CD4-positive, alpha-beta memory T cell (primary cell): ENCODE measurements at regions of chr18 and their contacts with region 1.

Region 1: DNA sequence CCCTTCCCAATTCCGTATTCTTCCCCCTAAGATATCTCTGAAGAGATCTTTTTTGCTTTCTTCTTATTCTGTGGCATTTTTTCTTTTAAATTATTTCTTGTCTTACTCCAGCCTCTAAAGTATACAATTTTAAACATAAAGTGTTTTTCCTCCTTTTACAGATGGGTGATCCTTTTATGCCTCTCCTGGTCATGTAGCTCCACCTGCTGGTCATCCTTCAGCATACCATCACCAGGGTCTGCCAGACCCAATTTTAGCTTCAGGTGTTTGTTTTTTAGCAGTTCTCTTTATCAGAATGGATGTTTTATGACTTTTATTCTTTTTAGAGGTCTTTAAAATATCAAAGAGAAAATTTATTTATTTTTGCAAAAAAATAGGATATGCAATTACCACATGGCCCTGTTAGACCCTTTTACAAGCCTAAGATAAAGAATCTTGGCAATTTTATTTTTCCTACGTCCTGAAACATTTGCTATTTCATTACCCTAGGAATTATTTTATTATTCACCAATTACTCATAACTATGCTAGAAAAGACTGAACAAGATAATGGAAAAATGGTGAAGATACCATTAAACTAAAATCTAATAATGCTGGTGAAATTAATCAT is 55.5 kb downstream of the PIGN start:
- DNase-seq: peak; percentile 54 to 64 (median 59)
- H3K4me3 ChIP-seq: no peak overlapping the region
- H3K4me3 Mint-ChIP-seq: no peak overlapping the region
- H3K27ac ChIP-seq: no peak overlapping the region
- H3K27ac Mint-ChIP-seq: no peak overlapping the region
- H3K4me1 ChIP-seq: no peaks in the 10 kb centered on the region
- H3K4me1 Mint-ChIP-seq: peaks cover 0 to 3% (median under 1%) of the 10 kb centered on the region in 4 donors
- H3K27me3 ChIP-seq: no peaks in the 10 kb centered on the region
- H3K27me3 Mint-ChIP-seq: no peaks in the 10 kb centered on the region

Region 2: DNA sequence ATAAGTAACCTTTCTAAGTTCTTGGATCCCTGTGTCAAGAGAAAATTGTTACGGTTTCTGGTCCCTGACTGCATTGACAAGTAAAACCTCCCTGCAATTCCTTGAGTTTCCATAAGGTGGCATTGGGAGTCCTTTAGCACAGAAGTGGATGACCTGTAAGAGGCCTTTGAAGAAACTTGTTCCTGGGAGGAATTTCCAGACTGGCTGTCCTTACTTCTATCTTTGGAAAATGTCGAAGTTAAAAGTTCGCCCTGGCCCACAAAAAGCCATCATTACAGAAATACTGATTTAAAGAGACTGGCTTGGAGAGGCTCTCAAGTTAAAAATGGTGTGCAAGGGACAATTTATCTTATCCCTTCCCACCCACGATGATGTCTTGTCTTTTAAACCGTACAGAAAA is 579.8 kb before region 1 on chr18:
- CTCF ChIA-PET with region 1: interaction called, 13 read pairs
- POLR2A ChIA-PET with region 1: no interaction called
- intact Hi-C with region 1: loop called (anchors 1 kb)
- DNase-seq: peak in 4 of 5 donors; percentile 5 to 27 (median 18)
- H3K4me3 ChIP-seq: no peak overlapping the region
- H3K4me3 Mint-ChIP-seq: no peak overlapping the region
- H3K27ac ChIP-seq: no peak overlapping the region
- H3K27ac Mint-ChIP-seq: no peak overlapping the region
- H3K4me1 ChIP-seq: no peaks in the 10 kb centered on the region
- H3K4me1 Mint-ChIP-seq: peaks cover 0 to 8% (median 1%) of the 10 kb centered on the region in 4 donors
- H3K27me3 ChIP-seq: no peaks in the 10 kb centered on the region
- H3K27me3 Mint-ChIP-seq: peaks cover 0 to 2% of the 10 kb centered on the region in 2 donors

Region 3: GRCh38 chr18:61581578-61582201 is 549.7 kb before region 1 on chr18:
- CTCF ChIA-PET with region 1: interaction called, 92 read pairs
- POLR2A ChIA-PET with region 1: no interaction called
- intact Hi-C with region 1: loop called (anchors 1 kb)
- DNase-seq: peak; percentile 47 to 62 (median 50)
- H3K4me3 ChIP-seq: no peak overlapping the region
- H3K4me3 Mint-ChIP-seq: peak overlapping the region in 5 of 8 donors; percentile 13 to 63 (median 37)
- H3K27ac ChIP-seq: no peak overlapping the region
- H3K27ac Mint-ChIP-seq: peak overlapping the region in 2 of 7 donors; percentile 17 to 53
- H3K4me1 ChIP-seq: peaks cover 6% of the 10 kb centered on the region
- H3K4me1 Mint-ChIP-seq: peaks cover 5 to 24% (median 9%) of the 10 kb centered on the region in 4 donors
- H3K27me3 ChIP-seq: no peaks in the 10 kb centered on the region
- H3K27me3 Mint-ChIP-seq: peaks cover 34 to 42% of the 10 kb centered on the region in 2 donors

Region 4: DNA sequence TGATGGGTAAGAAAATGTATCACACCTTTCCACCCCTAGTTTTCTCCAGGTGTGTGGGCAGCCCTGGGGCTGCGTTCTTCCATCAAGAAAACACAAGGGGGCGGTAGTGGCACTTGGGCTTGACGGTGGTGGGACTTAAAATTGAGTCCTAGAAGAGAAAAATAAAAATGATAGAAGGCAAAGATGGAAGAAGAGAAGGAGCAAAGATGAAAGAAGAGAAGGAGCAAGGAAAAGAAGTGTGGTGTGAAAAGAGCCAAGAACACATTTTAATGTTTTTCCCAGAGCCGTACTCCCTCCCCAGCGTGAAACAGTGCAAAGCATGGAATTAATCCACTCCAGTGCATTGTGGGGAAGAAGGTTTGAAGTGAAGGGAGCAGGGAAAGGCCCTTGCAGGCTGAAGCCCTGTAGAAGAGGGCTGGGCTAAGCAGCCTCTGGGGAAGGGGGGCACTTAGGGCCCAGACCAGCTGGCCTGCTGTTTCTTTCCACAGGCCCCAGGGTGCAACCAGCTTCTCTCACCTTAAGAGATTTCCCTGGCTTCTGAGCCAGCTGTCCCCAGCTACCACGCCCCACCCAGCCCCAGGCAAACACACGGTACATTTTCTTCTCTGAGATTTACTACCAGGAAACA is 495.4 kb before region 1 on chr18:
- CTCF ChIA-PET with region 1: interaction called, 7 read pairs
- POLR2A ChIA-PET with region 1: no interaction called
- intact Hi-C with region 1: loop called (anchors 1 kb)
- DNase-seq: peak in 4 of 5 donors; percentile 26 to 41 (median 34)
- H3K4me3 ChIP-seq: no peak overlapping the region
- H3K4me3 Mint-ChIP-seq: no peak overlapping the region
- H3K27ac ChIP-seq: no peak overlapping the region
- H3K27ac Mint-ChIP-seq: no peak overlapping the region
- H3K4me1 ChIP-seq: no peaks in the 10 kb centered on the region
- H3K4me1 Mint-ChIP-seq: peaks cover 0 to 2% (median 0%) of the 10 kb centered on the region in 4 donors
- H3K27me3 ChIP-seq: peaks cover 3% of the 10 kb centered on the region
- H3K27me3 Mint-ChIP-seq: peaks cover 4 to 7% of the 10 kb centered on the region in 2 donors

Region 5: GRCh38 chr18:61901323-61901986 is 229.9 kb before region 1 on chr18:
- CTCF ChIA-PET with region 1: no interaction called
- POLR2A ChIA-PET with region 1: no interaction called
- intact Hi-C with region 1: loop called (anchors 1 kb)
- DNase-seq: peak; percentile 35 to 49 (median 43)
- H3K4me3 ChIP-seq: no peak overlapping the region
- H3K4me3 Mint-ChIP-seq: no peak overlapping the region
- H3K27ac ChIP-seq: no peak overlapping the region
- H3K27ac Mint-ChIP-seq: no peak overlapping the region
- H3K4me1 ChIP-seq: no peaks in the 10 kb centered on the region
- H3K4me1 Mint-ChIP-seq: peaks cover 0 to 5% (median 2%) of the 10 kb centered on the region in 4 donors
- H3K27me3 ChIP-seq: no peaks in the 10 kb centered on the region
- H3K27me3 Mint-ChIP-seq: peaks cover 16% of the 10 kb centered on the region in 2 donors